Activated B cell treated with CpG ODN at 0.5 μM for 24 hours (primary cell): ENCODE measurements at regions of chr17 and their contacts with region 1.

Region 1: GRCh38 chr17:44186307-44187130 is at the start of gene TMUB2:
- DNase-seq: peak; percentile 99
- ATAC-seq: peak; percentile 96
- H3K4me3 Mint-ChIP-seq: peak within 1 kb of the TSS; percentile 99
- H3K27ac Mint-ChIP-seq: peak within 1 kb of the TSS; percentile 99
- H3K4me1 Mint-ChIP-seq: peaks cover 46% of the 10 kb centered on the region
- H3K27me3 Mint-ChIP-seq: no peaks in the 10 kb centered on the region
- CTCF ChIP-seq: no peak
- total RNA-seq, gene TMUB2: 32.3 and 36.0 TPM in 2 replicates

Region 2: DNA sequence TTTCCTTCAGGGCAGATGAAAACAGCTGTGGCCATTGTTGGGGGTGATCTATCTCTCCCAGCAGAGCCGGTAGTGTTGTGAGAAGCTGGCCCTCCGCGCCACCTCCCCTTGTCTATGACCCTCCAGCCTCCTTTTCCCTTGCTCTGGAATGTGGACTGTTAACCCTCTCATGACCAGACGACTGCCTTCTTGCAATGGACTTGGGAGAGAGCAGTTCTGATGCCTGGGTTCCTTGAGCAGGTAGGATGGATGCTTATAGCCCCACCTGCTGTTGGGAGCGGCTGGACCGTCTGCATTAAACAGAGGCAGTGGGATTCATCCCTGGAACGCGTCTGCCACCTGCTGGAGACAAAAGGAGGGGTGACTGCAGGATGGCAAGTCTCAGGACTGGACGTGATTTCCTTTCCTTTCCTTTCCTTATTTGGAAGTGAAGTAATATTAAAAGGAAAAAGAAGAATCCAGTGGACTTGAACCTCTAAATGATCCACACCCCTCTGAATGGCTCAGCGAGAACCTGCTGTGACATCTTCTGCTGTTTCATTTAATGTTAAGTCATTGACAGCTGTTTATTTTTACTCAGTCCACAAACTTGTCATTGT is 426.2 kb before region 1 on chr17:
- CTCF ChIA-PET with region 1: no interaction called
- POLR2A ChIA-PET with region 1: no interaction called
- intact Hi-C with region 1: no loop called
- DNase-seq: peak; percentile 75
- ATAC-seq: peak; percentile 99
- H3K4me3 Mint-ChIP-seq: no peak overlapping the region
- H3K27ac Mint-ChIP-seq: no peak overlapping the region
- H3K4me1 Mint-ChIP-seq: no peaks in the 10 kb centered on the region
- H3K27me3 Mint-ChIP-seq: peaks cover 31% of the 10 kb centered on the region
- CTCF ChIP-seq: peak; percentile 62

Region 3: DNA sequence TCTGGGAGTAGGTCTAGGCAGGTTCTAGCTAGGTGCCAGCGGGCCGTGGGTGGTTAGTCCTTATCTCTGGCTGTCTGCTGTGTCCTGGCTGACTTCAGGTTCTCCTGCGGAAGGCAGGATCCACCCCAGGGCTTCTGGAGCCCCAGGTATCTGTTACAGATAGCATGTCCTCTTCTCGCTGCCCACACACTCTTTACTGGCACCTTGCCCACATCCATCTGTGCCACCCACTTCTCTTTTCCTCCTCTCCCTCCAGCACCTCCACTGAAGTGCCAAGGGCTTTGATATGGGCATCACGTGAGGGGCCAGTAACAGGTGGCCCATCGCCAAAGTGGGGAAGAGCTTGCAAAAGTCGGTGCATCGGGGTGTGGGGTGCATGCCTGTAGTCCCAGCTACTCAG is 274.6 kb before region 1 on chr17:
- CTCF ChIA-PET with region 1: no interaction called
- POLR2A ChIA-PET with region 1: no interaction called
- intact Hi-C with region 1: no loop called
- DNase-seq: no peak
- ATAC-seq: no peak
- H3K4me3 Mint-ChIP-seq: no peak overlapping the region
- H3K27ac Mint-ChIP-seq: no peak overlapping the region
- H3K4me1 Mint-ChIP-seq: peaks cover 19% of the 10 kb centered on the region
- H3K27me3 Mint-ChIP-seq: peaks cover 18% of the 10 kb centered on the region
- CTCF ChIP-seq: no peak

Region 4: DNA sequence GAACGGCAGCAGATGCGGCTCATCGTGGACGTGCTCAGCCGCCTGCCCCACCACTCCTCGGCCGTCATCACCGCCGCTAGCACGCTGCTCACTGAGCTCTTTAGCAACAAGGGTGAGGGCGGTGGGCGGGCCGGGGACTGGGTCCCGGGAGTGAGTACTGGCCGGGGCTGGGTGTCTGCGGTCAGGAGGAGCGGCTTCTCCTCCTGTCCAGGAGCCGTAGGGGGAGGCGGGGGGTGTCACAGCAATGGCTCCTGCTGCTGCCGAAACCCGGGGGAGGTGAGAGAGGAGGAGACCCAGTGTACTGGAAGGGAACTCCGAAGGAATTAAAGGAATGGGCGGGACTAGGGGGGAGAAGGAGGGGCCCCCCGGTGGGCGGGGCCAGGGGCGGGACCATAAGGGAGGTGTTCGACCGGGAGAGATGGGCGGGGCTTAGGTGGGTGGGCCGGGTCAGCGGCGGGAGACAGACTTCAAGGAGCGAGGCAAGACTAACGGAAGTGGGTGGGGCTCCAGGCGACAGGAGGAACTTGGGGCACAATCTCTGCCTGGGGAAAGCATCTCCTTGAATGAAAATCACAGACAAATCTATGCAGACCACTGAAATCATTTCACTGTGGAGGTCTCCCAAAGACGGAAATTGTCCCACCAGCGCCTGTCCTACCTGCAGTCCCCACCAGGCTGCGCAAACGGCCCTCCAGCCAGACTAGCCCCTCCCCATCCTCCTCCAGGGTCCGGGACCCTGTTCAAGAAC is 179.7 kb before region 1 on chr17:
- CTCF ChIA-PET with region 1: no interaction called
- POLR2A ChIA-PET with region 1: no interaction called
- intact Hi-C with region 1: loop called (anchors 1 kb)
- DNase-seq: peak; percentile 88
- ATAC-seq: peak; percentile 91
- H3K4me3 Mint-ChIP-seq: peak overlapping the region; percentile 90
- H3K27ac Mint-ChIP-seq: peak overlapping the region; percentile 76
- H3K4me1 Mint-ChIP-seq: peaks cover 24% of the 10 kb centered on the region
- H3K27me3 Mint-ChIP-seq: peaks cover 12% of the 10 kb centered on the region
- CTCF ChIP-seq: no peak

Region 5: DNA sequence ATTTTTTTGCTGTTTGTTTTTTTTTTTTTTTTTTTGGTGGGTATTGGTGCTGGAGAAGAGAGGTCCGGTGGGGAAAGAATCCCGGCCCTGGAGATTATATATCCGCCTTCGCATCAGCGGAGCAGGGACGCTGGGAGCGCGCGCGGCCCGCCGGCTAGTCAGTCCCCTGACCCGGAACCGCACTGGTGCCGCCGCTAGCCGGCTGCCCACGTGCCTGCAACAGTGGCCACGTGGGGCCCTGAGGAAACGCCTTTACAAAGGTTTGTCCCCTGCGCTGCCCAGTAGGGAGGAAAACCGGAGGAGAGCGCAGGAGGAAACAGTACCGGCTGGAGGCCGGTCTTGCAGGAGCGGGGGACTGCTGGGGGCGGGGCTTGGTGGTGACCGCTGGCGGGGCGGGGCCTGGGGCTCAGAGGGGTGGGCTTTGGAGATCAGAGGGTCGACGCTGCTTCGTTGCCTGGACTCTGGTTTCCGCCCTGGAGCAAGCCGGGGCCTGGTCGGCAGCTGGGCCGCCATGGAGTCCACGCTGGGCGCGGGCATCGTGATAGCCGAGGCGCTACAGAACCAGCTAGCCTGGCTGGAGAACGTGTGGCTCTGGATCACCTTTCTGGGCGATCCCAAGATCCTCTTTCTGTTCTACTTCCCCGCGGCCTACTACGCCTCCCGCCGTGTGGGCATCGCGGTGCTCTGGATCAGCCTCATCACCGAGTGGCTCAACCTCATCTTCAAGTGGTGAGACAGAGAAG is 115.9 kb before region 1 on chr17 and contains the start of gene G6PC3:
- CTCF ChIA-PET with region 1: no interaction called
- POLR2A ChIA-PET with region 1: interaction called, 8 read pairs
- intact Hi-C with region 1: loop called (anchors 1 kb)
- DNase-seq: peak; percentile 73
- ATAC-seq: peak; percentile 73
- H3K4me3 Mint-ChIP-seq: peak within 1 kb of the TSS; percentile 97
- H3K27ac Mint-ChIP-seq: peak within 1 kb of the TSS; percentile 95
- H3K4me1 Mint-ChIP-seq: peaks cover 44% of the 10 kb centered on the region
- H3K27me3 Mint-ChIP-seq: no peaks in the 10 kb centered on the region
- CTCF ChIP-seq: no peak
- total RNA-seq, gene G6PC3: 30.9 and 35.2 TPM in 2 replicates

Region 6: DNA sequence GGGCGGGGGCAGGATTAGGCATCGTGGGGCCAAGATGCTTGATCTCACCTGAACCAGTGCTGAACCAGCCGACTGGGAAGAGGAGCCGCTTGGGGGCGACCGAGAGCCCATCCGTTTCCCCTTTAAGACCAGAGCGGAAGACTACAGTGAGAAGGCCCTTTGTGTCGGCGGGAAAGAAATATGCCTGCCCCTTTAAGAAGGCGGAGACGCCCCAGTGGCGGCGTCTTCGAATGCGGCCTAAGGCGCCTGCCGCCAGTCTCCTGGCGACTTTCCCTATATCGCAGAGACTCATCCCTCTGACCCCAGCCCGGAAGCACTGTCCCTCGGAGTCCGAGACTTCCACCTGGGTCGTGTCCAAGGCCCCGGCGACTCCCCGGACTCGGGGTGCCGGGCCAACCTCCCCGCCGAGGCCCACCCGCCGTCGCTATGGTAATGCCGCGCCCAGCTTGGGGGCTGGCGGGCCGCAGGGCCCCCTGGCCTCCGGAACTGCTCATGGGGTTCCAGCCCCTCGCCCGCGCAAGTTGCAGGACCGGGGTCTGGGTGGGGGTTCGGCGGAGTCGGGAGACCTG is 44.7 kb before region 1 on chr17 and contains the start of gene HROB:
- CTCF ChIA-PET with region 1: no interaction called
- POLR2A ChIA-PET with region 1: interaction called, 3 read pairs
- intact Hi-C with region 1: loop called (anchors 1 kb)
- DNase-seq: peak; percentile 96
- ATAC-seq: peak; percentile 98
- H3K4me3 Mint-ChIP-seq: peak within 1 kb of the TSS; percentile 84
- H3K27ac Mint-ChIP-seq: peak within 1 kb of the TSS; percentile 70
- H3K4me1 Mint-ChIP-seq: peaks cover 15% of the 10 kb centered on the region
- H3K27me3 Mint-ChIP-seq: peaks cover 8% of the 10 kb centered on the region
- CTCF ChIP-seq: no peak
- total RNA-seq, gene HROB: 2.2 and 5.0 TPM in 2 replicates

Region 7: DNA sequence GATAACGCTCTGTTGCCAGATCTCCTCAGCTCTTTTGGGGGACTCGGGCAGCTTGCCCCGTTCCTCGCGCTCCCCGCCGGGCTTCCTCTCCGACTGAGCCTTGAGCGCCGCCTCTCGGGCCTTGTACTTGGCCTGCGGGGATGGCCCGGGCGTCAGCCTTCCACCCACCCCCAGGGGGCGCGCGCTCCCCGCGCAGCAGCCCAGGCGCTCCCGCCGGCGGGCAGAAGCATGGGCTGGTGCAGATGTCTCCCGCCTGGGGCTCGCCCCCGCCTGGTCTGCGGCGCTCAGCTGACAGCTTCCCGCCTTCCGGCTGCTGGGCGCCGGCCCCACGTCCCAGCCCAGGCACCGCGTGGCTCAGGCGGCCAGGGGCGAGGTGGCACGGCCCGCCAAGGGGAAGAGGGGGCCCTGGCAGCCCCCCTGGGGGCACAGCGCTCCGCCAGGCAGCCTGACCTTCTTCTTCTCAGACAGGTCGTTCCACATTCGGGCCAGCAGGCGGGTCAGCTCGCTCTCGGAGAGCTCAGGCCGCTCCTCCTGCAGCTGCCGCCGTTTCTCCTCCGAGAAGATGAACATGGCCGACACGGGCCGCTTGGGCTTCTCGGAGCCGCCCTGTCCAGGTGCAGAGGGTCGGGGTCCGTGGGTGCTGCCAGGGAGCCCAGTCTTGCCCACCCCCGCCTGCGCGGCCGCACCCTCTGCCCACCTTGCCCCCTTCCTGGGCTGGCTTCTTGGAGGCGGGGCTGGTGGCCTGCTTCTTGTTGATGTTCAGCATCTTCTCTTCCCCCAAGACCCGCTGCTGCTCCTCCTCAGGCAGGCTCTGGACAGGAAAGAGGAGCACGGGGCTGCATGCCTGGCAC is 24.0 kb after region 1 on chr17:
- CTCF ChIA-PET with region 1: interaction called, 7 read pairs
- POLR2A ChIA-PET with region 1: interaction called, 11 read pairs
- intact Hi-C with region 1: no loop called
- DNase-seq: peak; percentile 93
- ATAC-seq: peak; percentile 98
- H3K4me3 Mint-ChIP-seq: peak overlapping the region; percentile 52
- H3K27ac Mint-ChIP-seq: peak overlapping the region; percentile 74
- H3K4me1 Mint-ChIP-seq: peaks cover 55% of the 10 kb centered on the region
- H3K27me3 Mint-ChIP-seq: no peaks in the 10 kb centered on the region
- CTCF ChIP-seq: peak; percentile 73

Region 8: DNA sequence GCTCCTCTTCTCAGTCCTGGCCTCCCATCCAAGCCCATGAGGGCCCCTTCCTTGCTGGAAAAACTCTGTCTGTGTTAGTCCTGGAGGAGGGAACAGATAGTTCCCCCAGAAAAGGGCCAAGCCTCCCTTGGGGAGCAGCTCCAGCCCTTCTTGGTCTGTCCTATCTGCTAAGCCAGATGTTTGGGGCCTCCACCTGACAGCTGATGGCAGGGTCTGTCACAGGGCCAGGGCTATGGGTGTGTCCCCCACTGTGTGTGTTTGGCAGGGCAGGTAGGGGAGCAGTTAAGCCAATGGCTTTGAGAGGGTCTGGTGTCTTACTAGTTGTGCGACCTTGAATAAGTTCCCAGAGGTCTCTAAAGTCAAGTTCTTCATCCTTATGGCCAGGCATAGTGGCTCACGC is 95.1 kb after region 1 on chr17:
- CTCF ChIA-PET with region 1: no interaction called
- POLR2A ChIA-PET with region 1: no interaction called
- intact Hi-C with region 1: no loop called
- DNase-seq: no peak
- ATAC-seq: no peak
- H3K4me3 Mint-ChIP-seq: no peak overlapping the region
- H3K27ac Mint-ChIP-seq: no peak overlapping the region
- H3K4me1 Mint-ChIP-seq: peaks cover 10% of the 10 kb centered on the region
- H3K27me3 Mint-ChIP-seq: peaks cover 6% of the 10 kb centered on the region
- CTCF ChIP-seq: no peak

Region 9: DNA sequence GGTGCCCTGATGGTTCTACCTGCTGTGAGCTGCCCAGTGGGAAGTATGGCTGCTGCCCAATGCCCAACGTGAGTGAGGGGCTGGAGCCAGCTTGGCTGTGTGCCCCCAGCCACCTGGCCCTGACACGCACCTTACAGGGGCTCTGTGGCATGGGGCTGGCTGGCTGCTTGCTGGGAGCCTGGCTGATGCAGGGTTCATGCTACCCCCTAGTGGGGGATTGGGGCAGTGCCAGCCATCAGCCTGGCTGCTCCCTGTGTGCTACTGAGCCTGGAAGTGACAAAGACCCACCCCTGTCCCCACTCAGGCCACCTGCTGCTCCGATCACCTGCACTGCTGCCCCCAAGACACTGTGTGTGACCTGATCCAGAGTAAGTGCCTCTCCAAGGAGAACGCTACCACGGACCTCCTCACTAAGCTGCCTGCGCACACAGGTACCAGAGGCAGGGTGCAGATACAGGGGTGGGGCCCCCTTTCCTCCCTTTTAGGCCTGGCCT is 164.3 kb after region 1 on chr17:
- CTCF ChIA-PET with region 1: no interaction called
- POLR2A ChIA-PET with region 1: interaction called, 16 read pairs
- intact Hi-C with region 1: no loop called
- DNase-seq: peak; percentile 71
- ATAC-seq: peak; percentile 42
- H3K4me3 Mint-ChIP-seq: no peak overlapping the region
- H3K27ac Mint-ChIP-seq: peak overlapping the region; percentile 65
- H3K4me1 Mint-ChIP-seq: peaks cover 54% of the 10 kb centered on the region
- H3K27me3 Mint-ChIP-seq: no peaks in the 10 kb centered on the region
- CTCF ChIP-seq: no peak

Region 10: GRCh38 chr17:45428050-45428617 is 1241.6 kb after region 1 on chr17:
- CTCF ChIA-PET with region 1: no interaction called
- POLR2A ChIA-PET with region 1: interaction called, 15 read pairs
- intact Hi-C with region 1: no loop called
- DNase-seq: peak; percentile 88
- ATAC-seq: peak; percentile 73
- H3K4me3 Mint-ChIP-seq: peak overlapping the region; percentile 84
- H3K27ac Mint-ChIP-seq: peak overlapping the region; percentile 92
- H3K4me1 Mint-ChIP-seq: peaks cover 35% of the 10 kb centered on the region
- H3K27me3 Mint-ChIP-seq: no peaks in the 10 kb centered on the region
- CTCF ChIP-seq: peak; percentile 96